Common myeloid progenitor, CD34-positive (primary cell): ENCODE measurements at regions of chr16 and their contacts with region 1.

Region 1: GRCh38 chr16:4487955-4488498 is 11.8 kb downstream of the HMOX2 start:
- DNase-seq: no peak
- H3K4me3 ChIP-seq: no peak overlapping the region
- H3K27ac ChIP-seq: peak overlapping the region in 1 of 2 experiments; percentile 18
- H3K4me1 ChIP-seq: peaks cover 10 to 11% (median 10%) of the 10 kb centered on the region in 4 experiments
- H3K27me3 ChIP-seq: no peaks in the 10 kb centered on the region

Region 2: GRCh38 chr16:4358831-4359561 is 129.0 kb before region 1 on chr16:
- CTCF ChIA-PET with region 1: no interaction called
- POLR2A ChIA-PET with region 1: no interaction called
- DNase-seq: peak; percentile 41 to 64 (median 53)
- H3K4me3 ChIP-seq: no peak overlapping the region
- H3K27ac ChIP-seq: no peak overlapping the region
- H3K4me1 ChIP-seq: no peaks in the 10 kb centered on the region
- H3K27me3 ChIP-seq: no peaks in the 10 kb centered on the region

Region 3: DNA sequence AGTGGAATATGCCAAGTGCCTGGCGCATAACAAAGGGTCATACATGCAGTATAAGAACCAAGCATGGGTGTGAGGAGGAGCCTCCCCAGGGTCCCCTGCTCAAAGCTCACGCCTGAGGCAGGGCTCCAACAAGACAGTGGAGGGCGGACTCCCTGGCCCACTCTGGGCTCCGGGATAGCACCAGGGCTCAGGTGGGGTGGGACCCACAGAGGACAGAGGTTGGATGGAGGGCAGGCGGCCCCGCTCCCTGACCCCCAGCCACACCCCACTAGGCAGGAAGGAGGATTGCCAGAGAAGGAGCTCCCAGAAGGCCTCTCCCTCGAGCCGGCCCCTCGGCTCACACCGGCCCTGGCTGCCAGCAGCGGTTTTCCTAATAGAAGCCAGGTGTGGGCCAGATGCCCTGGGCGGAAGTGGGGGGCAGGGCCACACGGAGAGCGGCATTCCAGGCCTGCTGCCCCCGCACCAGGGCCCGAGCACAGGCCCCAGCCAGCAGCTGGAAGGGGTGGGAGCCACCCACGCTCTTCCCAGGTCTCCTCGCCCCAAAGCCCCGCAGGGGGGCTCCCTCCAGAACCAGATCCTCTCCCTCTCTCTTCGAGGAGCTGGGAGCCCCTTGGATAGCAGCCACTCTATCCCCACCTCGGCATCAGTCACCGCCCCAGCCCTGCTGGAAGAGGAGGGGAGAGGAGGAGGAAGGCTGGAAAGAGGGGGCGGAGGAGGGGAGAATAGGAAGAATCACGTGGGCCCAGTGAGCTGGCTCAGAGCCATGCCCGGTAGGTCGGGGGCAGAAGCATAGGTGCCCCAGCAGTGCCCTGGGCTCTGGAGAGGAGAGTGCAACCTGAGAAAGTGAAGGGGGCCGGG is 95.4 kb before region 1 on chr16:
- CTCF ChIA-PET with region 1: no interaction called
- POLR2A ChIA-PET with region 1: no interaction called
- DNase-seq: no peak
- H3K4me3 ChIP-seq: no peak overlapping the region
- H3K27ac ChIP-seq: no peak overlapping the region
- H3K4me1 ChIP-seq: no peaks in the 10 kb centered on the region
- H3K27me3 ChIP-seq: no peaks in the 10 kb centered on the region

Region 4: GRCh38 chr16:4465977-4466779 is 21.8 kb before region 1 on chr16:
- CTCF ChIA-PET with region 1: no interaction called
- POLR2A ChIA-PET with region 1: no interaction called
- DNase-seq: no peak
- H3K4me3 ChIP-seq: no peak overlapping the region
- H3K27ac ChIP-seq: no peak overlapping the region
- H3K4me1 ChIP-seq: no peaks in the 10 kb centered on the region
- H3K27me3 ChIP-seq: no peaks in the 10 kb centered on the region

Region 5: GRCh38 chr16:4500272-4500671 is 12.2 kb after region 1 on chr16:
- CTCF ChIA-PET with region 1: interaction called, 20 read pairs
- POLR2A ChIA-PET with region 1: interaction called, 3 read pairs
- DNase-seq: no peak
- H3K4me3 ChIP-seq: no peak overlapping the region
- H3K27ac ChIP-seq: no peak overlapping the region
- H3K4me1 ChIP-seq: peaks cover 4 to 10% (median 8%) of the 10 kb centered on the region in 4 experiments
- H3K27me3 ChIP-seq: no peaks in the 10 kb centered on the region